CD14-positive monocyte (primary cell): ENCODE measurements at regions of chr2 and their contacts with region 1.

Region 1: DNA sequence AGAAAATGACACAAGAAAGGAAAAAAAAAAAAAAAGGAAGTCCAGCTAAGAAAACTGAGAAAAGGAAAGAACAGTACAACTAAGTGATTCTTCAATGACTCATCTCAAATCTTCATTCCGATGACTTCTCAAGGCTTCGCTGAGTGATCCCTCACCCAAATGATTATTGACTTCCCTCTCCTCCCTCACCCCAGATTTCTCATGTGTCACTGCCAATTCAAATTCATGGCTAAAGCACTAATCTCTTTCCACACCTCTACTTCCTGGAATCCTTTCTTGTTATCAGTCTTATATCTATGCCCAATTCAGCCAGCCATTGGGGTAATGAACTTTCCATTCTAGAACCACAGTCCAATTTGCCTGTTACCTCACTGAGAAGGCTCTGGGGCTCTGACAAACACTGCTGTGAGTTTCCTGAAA is 7.2 kb upstream of the ABCB11 start:
- DNase-seq: peak; percentile 85 to 98 (median 93)
- H3K4me3 ChIP-seq: peak overlapping the region in 1 of 3 experiments; percentile 37
- H3K4me3 Mint-ChIP-seq: peak overlapping the region; percentile 5 to 58
- H3K27ac ChIP-seq: peak overlapping the region; percentile 27 to 85
- H3K27ac Mint-ChIP-seq: peak overlapping the region; percentile 80 to 96 (median 90)
- H3K4me1 ChIP-seq: peaks cover 39 to 47% of the 10 kb centered on the region in 2 donors
- H3K4me1 Mint-ChIP-seq: peaks cover 45% of the 10 kb centered on the region
- H3K27me3 ChIP-seq: no peaks in the 10 kb centered on the region
- H3K27me3 Mint-ChIP-seq: peaks cover 0 to 1% (median 0%) of the 10 kb centered on the region in 3 donors
- CTCF ChIP-seq: no peak

Region 2: DNA sequence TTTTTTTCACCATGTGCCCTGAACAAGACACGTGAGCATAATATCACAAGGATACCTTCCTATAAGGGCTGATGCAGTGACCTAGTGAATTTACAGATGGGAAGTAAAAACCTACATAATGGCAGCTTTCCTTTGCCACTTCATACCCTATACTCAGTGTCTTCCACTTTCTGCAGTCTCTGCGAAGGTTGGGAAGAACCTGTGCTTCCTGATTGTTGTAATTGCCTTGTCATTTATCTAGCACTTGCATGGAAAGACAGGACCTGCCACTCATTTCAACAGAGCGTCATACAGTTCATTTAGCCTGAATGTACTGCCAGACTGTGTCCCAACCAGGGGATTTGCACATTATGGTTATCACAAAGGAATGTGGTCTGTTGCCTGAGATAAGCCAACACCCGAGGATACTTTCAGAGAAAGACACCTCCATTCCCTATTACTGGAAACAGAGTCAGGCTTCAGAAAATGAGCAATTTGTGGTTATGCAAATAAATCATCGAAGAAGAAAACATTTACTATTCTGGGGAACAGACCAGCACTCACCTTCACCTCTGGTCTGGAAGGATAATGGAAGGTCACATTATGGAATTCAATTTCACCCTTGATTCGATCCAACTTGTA is 62.2 kb before region 1 on chr2:
- intact Hi-C with region 1: loop called in 1 of 2 experiments (anchors 10 kb)
- DNase-seq: no peak
- H3K4me3 ChIP-seq: no peak overlapping the region
- H3K4me3 Mint-ChIP-seq: no peak overlapping the region
- H3K27ac ChIP-seq: no peak overlapping the region
- H3K27ac Mint-ChIP-seq: peak overlapping the region in 1 of 7 donors; percentile 19
- H3K4me1 ChIP-seq: peaks cover 16 to 21% of the 10 kb centered on the region in 2 donors
- H3K4me1 Mint-ChIP-seq: peaks cover 22% of the 10 kb centered on the region
- H3K27me3 ChIP-seq: no peaks in the 10 kb centered on the region
- H3K27me3 Mint-ChIP-seq: peaks cover 0 to 6% (median 0%) of the 10 kb centered on the region in 3 donors
- CTCF ChIP-seq: no peak

Region 3: GRCh38 chr2:169069341-169069740 is 31.0 kb after region 1 on chr2 and contains the start of gene DHRS9:
- intact Hi-C with region 1: loop called (anchors 2 to 5 kb)
- DNase-seq: peak; percentile 93 to 98 (median 98)
- H3K4me3 ChIP-seq: peak within 1 kb of the TSS; percentile 24 to 70 (median 57)
- H3K4me3 Mint-ChIP-seq: peak within 1 kb of the TSS; percentile 73 to 86
- H3K27ac ChIP-seq: peak within 1 kb of the TSS; percentile 64 to 90
- H3K27ac Mint-ChIP-seq: peak within 1 kb of the TSS; percentile 83 to 95 (median 91)
- H3K4me1 ChIP-seq: peaks cover 82 to 89% of the 10 kb centered on the region in 2 donors
- H3K4me1 Mint-ChIP-seq: peaks cover 86% of the 10 kb centered on the region
- H3K27me3 ChIP-seq: no peaks in the 10 kb centered on the region
- H3K27me3 Mint-ChIP-seq: peaks cover 0 to 3% (median 0%) of the 10 kb centered on the region in 3 donors
- CTCF ChIP-seq: no peak
- polyA plus RNA-seq, gene DHRS9: 10.0 to 12.9 (median 10.0) TPM

Region 4: GRCh38 chr2:169159686-169160085 is 121.3 kb after region 1 on chr2:
- intact Hi-C with region 1: no loop called
- DNase-seq: no peak
- H3K4me3 ChIP-seq: no peak overlapping the region
- H3K4me3 Mint-ChIP-seq: no peak overlapping the region
- H3K27ac ChIP-seq: no peak overlapping the region
- H3K27ac Mint-ChIP-seq: no peak overlapping the region
- H3K4me1 ChIP-seq: no peaks in the 10 kb centered on the region
- H3K4me1 Mint-ChIP-seq: no peaks in the 10 kb centered on the region
- H3K27me3 ChIP-seq: no peaks in the 10 kb centered on the region
- H3K27me3 Mint-ChIP-seq: peaks cover 0 to 2% (median 1%) of the 10 kb centered on the region in 3 donors
- CTCF ChIP-seq: no peak